Naive thymus-derived CD4-positive, alpha-beta T cell (primary cell): ENCODE measurements at regions of chr9 and their contacts with region 1.

Region 1: DNA sequence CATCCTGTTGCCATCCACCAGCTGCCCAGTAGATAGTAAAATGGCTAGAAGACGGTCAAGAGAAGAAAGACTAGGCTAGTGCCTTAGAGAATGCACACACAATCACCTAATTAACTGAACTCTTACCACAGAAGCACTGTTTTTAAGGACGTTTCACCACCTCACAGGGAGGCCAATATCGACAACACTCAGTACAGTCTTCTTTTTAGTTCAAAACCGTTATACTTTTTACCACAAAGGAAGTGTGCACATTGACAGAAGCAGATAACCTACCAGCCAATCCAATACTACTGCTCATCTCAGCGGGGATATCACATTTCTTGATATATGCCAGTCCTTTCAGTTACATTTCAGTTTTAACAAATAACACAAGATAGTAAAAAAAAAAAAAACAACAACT is 122.3 kb downstream of the GNAQ start:
- DNase-seq: peak in 7 of 9 donors; percentile 45 to 80 (median 63)
- ATAC-seq: peak; percentile 98
- H3K4me3 ChIP-seq: peak overlapping the region; percentile 27
- H3K4me3 Mint-ChIP-seq: peak overlapping the region; percentile 58 to 87 (median 78)
- H3K27ac ChIP-seq: peak overlapping the region; percentile 65
- H3K27ac Mint-ChIP-seq: peak overlapping the region; percentile 68 to 97 (median 92)
- H3K4me1 ChIP-seq: peaks cover 6 to 32% of the 10 kb centered on the region in 2 donors
- H3K4me1 Mint-ChIP-seq: peaks cover 45 to 70% (median 61%) of the 10 kb centered on the region in 7 donors
- H3K27me3 ChIP-seq: no peaks in the 10 kb centered on the region
- H3K27me3 Mint-ChIP-seq: no peaks in the 10 kb centered on the region

Region 2: DNA sequence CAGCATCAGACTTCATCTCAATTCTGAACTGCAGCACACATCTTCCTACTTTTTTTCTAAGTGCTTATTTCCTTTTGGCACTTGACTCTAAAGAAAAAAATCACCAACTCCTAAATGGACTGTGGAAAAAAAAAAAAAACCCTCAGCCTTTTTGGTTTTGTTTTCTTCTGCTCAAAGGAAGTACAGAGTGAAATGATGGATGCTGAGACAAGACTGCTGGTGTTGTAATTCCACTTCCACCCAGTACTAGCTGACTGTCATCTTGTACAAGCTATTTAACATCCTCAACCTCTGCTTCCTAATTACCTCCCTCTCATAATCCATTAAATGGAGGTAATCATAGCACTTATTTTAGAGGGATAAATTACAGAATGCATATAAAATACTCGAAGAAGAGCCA is 89.6 kb before region 1 on chr9:
- CTCF ChIA-PET with region 1: no interaction called
- POLR2A ChIA-PET with region 1: no interaction called
- intact Hi-C with region 1: loop called in 1 of 2 experiments (anchors 5 kb)
- DNase-seq: no peak
- ATAC-seq: peak; percentile 54
- H3K4me3 ChIP-seq: no peak overlapping the region
- H3K4me3 Mint-ChIP-seq: no peak overlapping the region
- H3K27ac ChIP-seq: no peak overlapping the region
- H3K27ac Mint-ChIP-seq: no peak overlapping the region
- H3K4me1 ChIP-seq: no peaks in the 10 kb centered on the region
- H3K4me1 Mint-ChIP-seq: peaks cover 3 to 30% (median 21%) of the 10 kb centered on the region in 7 donors
- H3K27me3 ChIP-seq: no peaks in the 10 kb centered on the region
- H3K27me3 Mint-ChIP-seq: no peaks in the 10 kb centered on the region

Region 3: GRCh38 chr9:77865385-77866047 is 43.8 kb before region 1 on chr9:
- CTCF ChIA-PET with region 1: no interaction called
- POLR2A ChIA-PET with region 1: no interaction called
- intact Hi-C with region 1: loop called in 1 of 2 experiments (anchors 5 kb)
- DNase-seq: no peak
- ATAC-seq: no peak
- H3K4me3 ChIP-seq: no peak overlapping the region
- H3K4me3 Mint-ChIP-seq: peak overlapping the region in 1 of 10 donors; percentile 44
- H3K27ac ChIP-seq: no peak overlapping the region
- H3K27ac Mint-ChIP-seq: no peak overlapping the region
- H3K4me1 ChIP-seq: no peaks in the 10 kb centered on the region
- H3K4me1 Mint-ChIP-seq: peaks cover 4 to 29% (median 9%) of the 10 kb centered on the region in 7 donors
- H3K27me3 ChIP-seq: no peaks in the 10 kb centered on the region
- H3K27me3 Mint-ChIP-seq: no peaks in the 10 kb centered on the region

Region 4: DNA sequence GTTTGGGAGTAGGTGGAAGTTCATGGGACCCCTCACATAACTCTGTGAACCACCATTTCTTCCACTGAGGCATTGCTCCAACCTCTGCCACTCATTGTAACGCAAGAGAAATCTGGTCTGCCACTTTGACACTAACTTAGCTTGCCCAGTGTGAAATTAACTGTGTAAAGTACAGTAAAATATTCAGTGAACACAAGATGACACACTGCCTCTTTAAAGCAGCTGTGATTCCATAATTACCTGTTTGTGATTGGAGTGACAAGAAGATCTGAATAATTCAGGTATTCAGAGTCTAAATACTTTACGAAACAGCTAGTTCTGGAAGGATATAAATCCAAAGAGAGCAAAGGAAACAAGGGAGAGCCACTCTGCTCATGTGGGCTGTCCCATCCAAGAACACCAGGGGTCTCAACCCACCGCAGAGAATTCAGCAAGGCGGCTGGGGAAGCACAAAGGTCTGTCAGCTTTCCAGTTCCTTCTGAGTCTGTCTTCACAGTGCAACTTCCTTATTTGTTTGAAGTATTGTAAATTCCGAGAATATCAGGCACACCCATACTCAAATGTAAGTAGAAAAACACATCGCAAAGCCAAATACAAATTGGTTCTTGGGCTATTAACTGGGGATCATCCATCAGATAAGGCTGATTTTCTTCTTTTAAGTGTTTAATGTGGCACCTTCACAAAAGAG is 35.4 kb after region 1 on chr9:
- CTCF ChIA-PET with region 1: no interaction called
- POLR2A ChIA-PET with region 1: no interaction called
- intact Hi-C with region 1: loop called in 1 of 2 experiments (anchors 5 kb)
- DNase-seq: peak in 7 of 9 donors; percentile 9 to 47 (median 31)
- ATAC-seq: peak; percentile 73
- H3K4me3 ChIP-seq: peak overlapping the region; percentile 14
- H3K4me3 Mint-ChIP-seq: peak overlapping the region; percentile 50 to 86 (median 78)
- H3K27ac ChIP-seq: peak overlapping the region; percentile 44
- H3K27ac Mint-ChIP-seq: peak overlapping the region; percentile 58 to 99 (median 87)
- H3K4me1 ChIP-seq: peaks cover 0 to 44% of the 10 kb centered on the region in 2 donors
- H3K4me1 Mint-ChIP-seq: peaks cover 42 to 77% (median 60%) of the 10 kb centered on the region in 7 donors
- H3K27me3 ChIP-seq: no peaks in the 10 kb centered on the region
- H3K27me3 Mint-ChIP-seq: no peaks in the 10 kb centered on the region

Region 5: GRCh38 chr9:77977210-77977611 is 67.9 kb after region 1 on chr9:
- CTCF ChIA-PET with region 1: no interaction called
- POLR2A ChIA-PET with region 1: no interaction called
- intact Hi-C with region 1: loop called in 1 of 2 experiments (anchors 5 kb)
- DNase-seq: peak; percentile 12 to 58 (median 47)
- ATAC-seq: peak; percentile 78
- H3K4me3 ChIP-seq: peak overlapping the region; percentile 2
- H3K4me3 Mint-ChIP-seq: peak overlapping the region in 9 of 10 donors; percentile 29 to 77 (median 60)
- H3K27ac ChIP-seq: peak overlapping the region; percentile 20
- H3K27ac Mint-ChIP-seq: peak overlapping the region; percentile 57 to 87 (median 78)
- H3K4me1 ChIP-seq: peaks cover 23 to 45% of the 10 kb centered on the region in 2 donors
- H3K4me1 Mint-ChIP-seq: peaks cover 41 to 76% (median 62%) of the 10 kb centered on the region in 7 donors
- H3K27me3 ChIP-seq: no peaks in the 10 kb centered on the region
- H3K27me3 Mint-ChIP-seq: no peaks in the 10 kb centered on the region